GM12878 (cell line): ENCODE measurements at regions of chr9 and their contacts with region 1.

Region 1: GRCh38 chr9:130682490-130683121 is 11.0 kb upstream of the EXOSC2 start:
- DNase-seq: no peak
- ATAC-seq: peak; percentile 73
- H3K4me3 ChIP-seq: peak overlapping the region; percentile 72
- H3K27ac ChIP-seq: no peak overlapping the region
- H3K4me1 ChIP-seq: peaks cover 7% of the 10 kb centered on the region
- H3K27me3 ChIP-seq: peaks cover 0 to 5% of the 10 kb centered on the region in 2 experiments; a peak in 3 of 4 replicates
- CTCF ChIP-seq: peak; percentile 75 to 79 (median 75)
- EP300 ChIP-seq: no peak
- POLR2A ChIP-seq: no peak
- RAD21 ChIP-seq: peak; percentile 87

Region 2: GRCh38 chr9:130451509-130452388 is 230.9 kb before region 1 on chr9:
- CTCF ChIA-PET with region 1: no interaction called
- POLR2A ChIA-PET with region 1: no interaction called
- RAD21 ChIA-PET with region 1: no interaction called
- SMC1A ChIA-PET with region 1: no interaction called
- in situ Hi-C with region 1: loop called (anchors 10 kb)
- intact Hi-C with region 1: no loop called
- DNase-seq: no peak
- ATAC-seq: peak; percentile 52
- H3K4me3 ChIP-seq: no peak overlapping the region
- H3K27ac ChIP-seq: no peak overlapping the region
- H3K4me1 ChIP-seq: no peaks in the 10 kb centered on the region
- H3K27me3 ChIP-seq: no peaks in the 10 kb centered on the region
- CTCF ChIP-seq: peak; percentile 8 to 44 (median 29); a peak in 1 of 6 replicates
- EP300 ChIP-seq: no peak
- POLR2A ChIP-seq: no peak
- RAD21 ChIP-seq: no peak

Region 3: DNA sequence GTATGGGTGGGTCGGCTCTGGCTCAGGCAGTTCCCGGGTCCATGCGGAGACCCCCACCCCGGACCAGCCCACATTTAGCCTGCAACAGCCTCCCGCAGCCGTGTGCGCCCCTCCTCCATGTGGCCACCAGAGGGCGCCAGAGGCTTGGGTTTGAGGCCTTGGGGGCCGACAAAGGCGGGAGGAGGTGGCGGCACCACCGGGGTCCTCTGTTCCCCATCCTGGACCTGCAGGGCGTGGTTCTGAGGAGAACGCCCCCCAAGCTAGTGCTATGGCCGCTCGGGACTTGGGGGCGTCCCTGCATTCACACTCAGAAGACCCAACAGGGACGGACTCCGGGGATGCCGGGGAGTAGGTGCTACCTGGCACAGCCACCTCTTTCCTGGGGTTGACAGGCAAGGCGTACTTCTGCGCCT is 221.4 kb before region 1 on chr9:
- CTCF ChIA-PET with region 1: interaction called, 111 read pairs
- POLR2A ChIA-PET with region 1: interaction called, 3 read pairs
- RAD21 ChIA-PET with region 1: interaction called, 13 read pairs
- SMC1A ChIA-PET with region 1: interaction called, 12 read pairs
- in situ Hi-C with region 1: loop called (anchors 10 kb)
- intact Hi-C with region 1: loop called (anchors 1 kb)
- DNase-seq: no peak
- ATAC-seq: peak; percentile 94
- H3K4me3 ChIP-seq: no peak overlapping the region
- H3K27ac ChIP-seq: no peak overlapping the region
- H3K4me1 ChIP-seq: no peaks in the 10 kb centered on the region
- H3K27me3 ChIP-seq: peaks cover 0 to 2% of the 10 kb centered on the region in 2 experiments; a peak in 2 of 4 replicates
- CTCF ChIP-seq: peak; percentile 80 to 92 (median 92); a peak in 5 of 6 replicates
- EP300 ChIP-seq: no peak
- POLR2A ChIP-seq: no peak
- RAD21 ChIP-seq: peak; percentile 97

Region 4: GRCh38 chr9:130616451-130616850 is 66.2 kb before region 1 on chr9:
- CTCF ChIA-PET with region 1: no interaction called
- POLR2A ChIA-PET with region 1: no interaction called
- RAD21 ChIA-PET with region 1: no interaction called
- SMC1A ChIA-PET with region 1: no interaction called
- in situ Hi-C with region 1: no loop called
- intact Hi-C with region 1: no loop called
- DNase-seq: no peak
- ATAC-seq: no peak
- H3K4me3 ChIP-seq: no peak overlapping the region
- H3K27ac ChIP-seq: no peak overlapping the region
- H3K4me1 ChIP-seq: no peaks in the 10 kb centered on the region
- H3K27me3 ChIP-seq: no peaks in the 10 kb centered on the region
- CTCF ChIP-seq: no peak
- EP300 ChIP-seq: no peak
- POLR2A ChIP-seq: no peak
- RAD21 ChIP-seq: no peak

Region 5: DNA sequence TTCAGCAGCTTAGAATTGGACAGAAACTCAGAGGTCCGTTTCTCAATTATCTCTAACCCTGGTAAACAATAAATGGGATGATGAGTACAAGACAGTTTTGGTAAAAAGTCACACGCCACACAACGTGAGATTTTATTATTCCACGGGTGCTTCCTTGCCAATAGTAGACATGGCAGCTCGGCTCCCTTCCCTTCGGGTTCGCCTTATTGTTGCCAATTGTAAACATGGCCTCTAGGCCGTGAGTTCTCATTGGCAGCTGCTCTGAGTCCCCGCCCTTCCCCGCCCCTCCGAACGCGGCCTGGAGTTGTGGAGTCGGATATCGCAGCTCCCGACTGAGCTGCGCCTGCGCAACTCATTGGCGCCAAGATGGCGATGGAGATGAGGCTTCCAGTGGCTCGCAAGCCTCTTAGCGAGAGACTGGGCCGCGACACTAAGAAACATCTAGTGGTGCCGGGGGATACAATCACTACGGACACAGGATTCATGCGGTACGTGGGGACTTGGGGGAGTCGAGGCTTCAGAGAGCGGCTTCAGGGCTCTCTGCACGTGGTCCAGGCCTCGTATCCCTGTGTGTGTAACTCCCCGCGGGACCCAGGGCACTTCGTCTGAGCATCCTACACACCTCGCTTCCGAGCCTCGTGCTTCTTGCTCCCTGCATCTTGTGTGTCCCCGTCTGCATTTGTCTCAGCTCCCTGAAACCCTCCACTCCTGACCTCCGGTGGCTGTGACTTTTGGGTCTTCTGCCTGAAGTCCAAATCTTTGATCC is 11.0 kb after region 1 on chr9 and contains the start of gene EXOSC2:
- CTCF ChIA-PET with region 1: interaction called, 29 read pairs
- POLR2A ChIA-PET with region 1: interaction called, 6 read pairs
- RAD21 ChIA-PET with region 1: interaction called, 4 read pairs
- SMC1A ChIA-PET with region 1: interaction called, 6 read pairs
- in situ Hi-C with region 1: no loop called
- intact Hi-C with region 1: no loop called
- DNase-seq: peak; percentile 92
- ATAC-seq: peak; percentile 99
- H3K4me3 ChIP-seq: peak within 1 kb of the TSS; percentile 98
- H3K27ac ChIP-seq: peak within 1 kb of the TSS; percentile 86
- H3K4me1 ChIP-seq: peaks cover 13% of the 10 kb centered on the region
- H3K27me3 ChIP-seq: no peaks in the 10 kb centered on the region
- CTCF ChIP-seq: no peak
- EP300 ChIP-seq: no peak
- POLR2A ChIP-seq: peak; percentile 97
- RAD21 ChIP-seq: no peak
- polyA plus RNA-seq, gene EXOSC2: 26.3 to 48.8 TPM